CD14-positive monocyte (primary cell): ENCODE measurements at regions of chr20 and their contacts with region 1.

Region 1: DNA sequence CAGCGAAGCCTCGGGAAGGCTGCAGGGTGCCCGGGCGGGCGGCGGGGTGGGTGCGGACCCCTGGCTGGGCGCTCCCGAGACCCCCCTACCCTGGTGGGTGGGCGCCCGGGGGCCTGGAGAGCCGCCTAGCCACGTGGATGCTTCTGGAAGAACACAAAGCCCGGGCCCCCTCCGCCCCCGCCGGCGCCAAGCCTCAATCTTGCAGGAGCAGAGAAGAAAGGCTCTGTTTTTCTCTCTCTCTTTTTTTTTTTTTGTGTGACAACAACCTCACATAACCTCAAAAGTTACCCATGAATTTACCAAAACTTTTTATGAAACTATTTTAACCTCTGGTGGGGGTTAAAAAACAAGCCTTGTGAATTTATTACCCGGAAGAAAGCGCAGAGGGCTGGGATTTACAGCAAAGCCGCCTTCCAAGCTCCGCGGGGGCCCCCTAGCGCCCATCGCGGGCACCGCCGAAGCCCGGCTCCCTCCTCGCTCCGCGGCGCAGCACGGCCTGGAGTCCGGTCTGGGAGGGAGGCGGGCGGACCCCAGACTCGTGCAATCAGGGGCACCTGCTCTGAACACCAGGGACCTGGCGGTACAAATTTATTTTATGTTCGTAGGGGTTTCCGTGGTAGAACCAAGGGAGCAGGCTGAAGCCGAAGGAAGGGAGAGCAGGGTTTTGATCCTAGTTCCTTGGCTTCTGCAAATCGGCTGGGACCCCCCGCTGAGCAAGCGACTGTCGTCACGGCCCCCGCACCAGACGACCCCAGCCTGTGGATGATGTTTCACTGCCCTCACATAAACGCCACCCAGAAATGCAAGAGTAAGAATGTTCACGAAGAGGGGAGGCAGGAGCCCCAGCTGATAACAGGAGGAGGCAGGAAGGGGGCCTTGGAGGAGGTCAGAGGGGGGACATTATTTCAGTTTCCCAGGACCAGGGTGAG is 58.9 kb downstream of the ZNF831 start:
- DNase-seq: peak; percentile 42 to 67 (median 61)
- H3K4me3 ChIP-seq: peak overlapping the region; percentile 6 to 66 (median 29)
- H3K4me3 Mint-ChIP-seq: peak overlapping the region; percentile 58 to 90
- H3K27ac ChIP-seq: no peak overlapping the region
- H3K27ac Mint-ChIP-seq: no peak overlapping the region
- H3K4me1 ChIP-seq: peaks cover 6 to 10% of the 10 kb centered on the region in 2 donors
- H3K4me1 Mint-ChIP-seq: peaks cover 14% of the 10 kb centered on the region
- H3K27me3 ChIP-seq: peaks cover 52 to 57% of the 10 kb centered on the region in 2 donors
- H3K27me3 Mint-ChIP-seq: peaks cover 37 to 45% (median 42%) of the 10 kb centered on the region in 3 donors
- CTCF ChIP-seq: peak; percentile 98

Region 2: DNA sequence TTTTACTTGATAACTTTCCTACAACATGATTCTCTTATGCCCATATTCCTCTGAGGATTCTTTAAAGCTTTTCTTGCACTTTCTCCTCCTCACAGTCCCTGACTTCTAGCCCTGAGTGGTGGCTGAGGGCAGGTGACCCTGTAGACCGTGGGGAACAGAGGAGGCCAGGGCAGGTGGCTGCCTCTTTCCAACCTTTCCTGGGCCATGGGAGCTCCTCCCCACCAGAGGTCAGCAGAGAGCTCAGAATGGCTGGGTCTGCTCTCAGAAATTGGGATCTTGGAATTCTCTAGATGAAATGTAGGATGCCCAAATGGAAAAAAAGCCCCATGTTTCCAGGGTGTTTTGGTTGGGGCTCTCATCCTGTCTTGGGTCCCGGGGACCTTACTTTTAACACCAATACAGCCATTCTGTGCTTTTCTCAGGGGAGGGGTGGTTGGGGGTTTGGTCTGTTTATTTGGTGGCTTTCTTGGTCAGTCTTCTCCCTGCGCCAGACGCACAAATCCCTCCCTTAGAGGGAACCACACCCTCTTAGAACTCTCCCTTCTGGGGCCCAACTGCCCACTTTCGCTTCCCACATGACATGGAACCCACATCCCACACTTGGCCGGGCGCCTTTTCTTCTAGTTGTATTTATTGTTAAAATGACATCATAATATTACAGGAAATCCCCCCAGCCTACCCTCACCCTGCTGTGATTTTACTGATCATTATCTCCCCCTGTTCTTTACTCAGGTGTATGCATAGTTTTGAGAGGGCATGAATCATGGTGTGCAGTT is 352.1 kb before region 1 on chr20:
- intact Hi-C with region 1: loop called (anchors 5 kb)
- DNase-seq: peak in 2 of 3 donors; percentile 36 to 44
- H3K4me3 ChIP-seq: no peak overlapping the region
- H3K4me3 Mint-ChIP-seq: peak overlapping the region in 1 of 2 donors; percentile 22
- H3K27ac ChIP-seq: no peak overlapping the region
- H3K27ac Mint-ChIP-seq: peak overlapping the region in 1 of 7 donors; percentile 23
- H3K4me1 ChIP-seq: peaks cover 6 to 10% of the 10 kb centered on the region in 2 donors
- H3K4me1 Mint-ChIP-seq: peaks cover 14% of the 10 kb centered on the region
- H3K27me3 ChIP-seq: peaks cover 10% of the 10 kb centered on the region in 2 donors
- H3K27me3 Mint-ChIP-seq: peaks cover 8 to 37% (median 24%) of the 10 kb centered on the region in 3 donors
- CTCF ChIP-seq: peak; percentile 77

Region 3: GRCh38 chr20:59082077-59082740 is 140.3 kb before region 1 on chr20:
- intact Hi-C with region 1: loop called in 1 of 2 experiments (anchors 5 kb)
- DNase-seq: peak in 1 of 3 donors; percentile 13
- H3K4me3 ChIP-seq: no peak overlapping the region
- H3K4me3 Mint-ChIP-seq: no peak overlapping the region
- H3K27ac ChIP-seq: no peak overlapping the region
- H3K27ac Mint-ChIP-seq: no peak overlapping the region
- H3K4me1 ChIP-seq: peaks cover 11 to 13% of the 10 kb centered on the region in 2 donors
- H3K4me1 Mint-ChIP-seq: peaks cover 12% of the 10 kb centered on the region
- H3K27me3 ChIP-seq: peaks cover 18 to 20% of the 10 kb centered on the region in 2 donors
- H3K27me3 Mint-ChIP-seq: peaks cover 11 to 13% (median 12%) of the 10 kb centered on the region in 3 donors
- CTCF ChIP-seq: peak; percentile 52

Region 4: GRCh38 chr20:59087829-59088433 is 134.6 kb before region 1 on chr20:
- intact Hi-C with region 1: loop called (anchors 1 to 5 kb)
- DNase-seq: peak; percentile 56 to 77 (median 70)
- H3K4me3 ChIP-seq: no peak overlapping the region
- H3K4me3 Mint-ChIP-seq: no peak overlapping the region
- H3K27ac ChIP-seq: no peak overlapping the region
- H3K27ac Mint-ChIP-seq: peak overlapping the region in 1 of 7 donors; percentile 58
- H3K4me1 ChIP-seq: no peaks in the 10 kb centered on the region
- H3K4me1 Mint-ChIP-seq: peaks cover 4% of the 10 kb centered on the region
- H3K27me3 ChIP-seq: peaks cover 16 to 20% of the 10 kb centered on the region in 2 donors
- H3K27me3 Mint-ChIP-seq: peaks cover 7 to 12% (median 7%) of the 10 kb centered on the region in 3 donors
- CTCF ChIP-seq: peak; percentile 96